Activated naive CD4-positive, alpha-beta T cell treated with anti-CD3 and anti-CD28 coated beads for 36 hours (primary cell): ENCODE measurements at regions of chr18 and their contacts with region 1.

Region 1: DNA sequence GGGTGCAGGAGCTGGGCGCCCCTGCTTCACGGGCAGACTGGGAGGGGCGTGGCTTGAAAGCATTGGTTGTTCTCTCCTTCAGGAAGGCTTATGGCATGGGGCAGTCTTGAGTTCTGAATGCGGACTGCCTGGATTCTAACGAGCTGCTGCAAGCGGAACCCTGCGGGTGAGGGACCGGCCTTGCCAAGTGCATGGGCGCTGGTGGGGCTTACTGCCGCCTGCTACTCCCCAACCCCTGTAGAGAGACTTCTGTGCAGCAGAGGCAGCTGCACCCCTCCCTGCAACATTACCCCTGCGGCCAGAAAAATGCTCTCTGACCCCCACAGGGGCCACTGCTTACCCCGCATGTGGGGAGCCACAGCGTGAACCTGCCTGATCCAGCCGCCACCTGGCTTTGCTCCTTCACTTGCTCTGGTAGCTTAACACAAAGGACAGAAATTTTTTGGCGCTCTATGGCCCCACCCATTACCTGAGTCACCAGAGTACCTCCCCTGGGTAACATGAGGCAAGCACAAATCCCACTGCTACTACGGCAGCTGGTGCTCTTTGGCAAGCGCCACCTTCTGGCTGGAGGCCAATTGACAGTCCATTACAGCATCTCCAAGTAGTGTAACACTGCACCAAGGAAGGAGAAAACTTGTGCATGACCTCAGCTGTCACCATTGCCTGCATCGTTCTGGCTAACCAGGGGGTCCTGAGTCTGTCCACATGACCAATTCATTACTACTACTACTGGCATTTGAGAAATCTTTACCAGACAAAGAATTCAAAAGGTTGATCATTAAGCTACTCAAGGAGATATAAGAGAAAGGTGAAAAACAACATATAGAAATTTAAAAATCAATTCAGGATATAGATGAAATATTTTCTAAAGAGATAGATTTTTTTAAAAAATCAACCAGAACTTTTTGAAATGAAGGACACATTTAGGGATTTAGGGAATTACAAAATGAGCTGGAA is 35.4 kb downstream of the MYL12B start:
- DNase-seq: peak; percentile 98
- H3K4me3 Mint-ChIP-seq: peak overlapping the region; percentile 93
- H3K27ac Mint-ChIP-seq: peak overlapping the region; percentile 79
- H3K4me1 Mint-ChIP-seq: peaks cover 3% of the 10 kb centered on the region
- H3K27me3 Mint-ChIP-seq: peaks cover 11% of the 10 kb centered on the region

Region 2: GRCh38 chr18:1779587-1779986 is 1517.7 kb before region 1 on chr18:
- CTCF ChIA-PET with region 1: no interaction called
- intact Hi-C with region 1: no loop called
- DNase-seq: no peak
- H3K4me3 Mint-ChIP-seq: no peak overlapping the region
- H3K27ac Mint-ChIP-seq: no peak overlapping the region
- H3K4me1 Mint-ChIP-seq: no peaks in the 10 kb centered on the region
- H3K27me3 Mint-ChIP-seq: no peaks in the 10 kb centered on the region

Region 3: GRCh38 chr18:2889761-2890192 is 407.5 kb before region 1 on chr18:
- CTCF ChIA-PET with region 1: no interaction called
- intact Hi-C with region 1: no loop called
- DNase-seq: no peak
- H3K4me3 Mint-ChIP-seq: no peak overlapping the region
- H3K27ac Mint-ChIP-seq: no peak overlapping the region
- H3K4me1 Mint-ChIP-seq: peaks cover 31% of the 10 kb centered on the region
- H3K27me3 Mint-ChIP-seq: no peaks in the 10 kb centered on the region

Region 4: DNA sequence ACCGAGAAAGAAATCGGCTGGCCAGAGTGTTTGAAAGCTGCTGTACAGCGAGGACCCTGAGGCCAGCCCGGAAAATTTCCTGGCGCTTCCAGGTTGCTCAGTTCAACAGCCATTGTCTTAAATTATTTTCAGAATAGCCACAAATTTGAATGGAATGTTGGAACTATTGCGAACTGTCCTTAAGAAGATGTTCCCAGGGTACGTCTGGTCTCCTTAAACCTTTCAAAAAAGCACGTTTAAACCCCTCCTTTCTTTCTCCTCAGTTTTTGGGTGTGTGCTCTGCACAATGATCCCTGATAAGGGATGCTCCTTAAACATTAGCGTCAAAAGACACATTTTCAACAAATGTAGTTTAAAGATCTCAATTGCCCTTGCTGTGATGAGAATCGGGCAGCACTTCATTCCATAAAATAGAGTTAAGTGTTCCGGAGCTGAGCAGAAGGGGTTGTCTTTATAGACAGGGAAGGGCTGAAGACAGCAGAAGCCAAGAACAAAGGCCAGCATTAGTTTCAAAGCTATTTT is 269.9 kb before region 1 on chr18:
- CTCF ChIA-PET with region 1: no interaction called
- intact Hi-C with region 1: no loop called
- DNase-seq: no peak
- H3K4me3 Mint-ChIP-seq: no peak overlapping the region
- H3K27ac Mint-ChIP-seq: no peak overlapping the region
- H3K4me1 Mint-ChIP-seq: peaks cover 2% of the 10 kb centered on the region
- H3K27me3 Mint-ChIP-seq: no peaks in the 10 kb centered on the region

Region 5: GRCh38 chr18:3261371-3262246 is 35.7 kb before region 1 on chr18 and contains the start of gene MYL12B:
- CTCF ChIA-PET with region 1: interaction called, 9 read pairs
- intact Hi-C with region 1: loop called (anchors 1 kb)
- DNase-seq: peak; percentile 79
- H3K4me3 Mint-ChIP-seq: peak within 1 kb of the TSS; percentile 92
- H3K27ac Mint-ChIP-seq: peak within 1 kb of the TSS; percentile 97
- H3K4me1 Mint-ChIP-seq: peaks cover 64% of the 10 kb centered on the region
- H3K27me3 Mint-ChIP-seq: no peaks in the 10 kb centered on the region
- total RNA-seq, gene MYL12B: 288 to 293 TPM

Region 6: DNA sequence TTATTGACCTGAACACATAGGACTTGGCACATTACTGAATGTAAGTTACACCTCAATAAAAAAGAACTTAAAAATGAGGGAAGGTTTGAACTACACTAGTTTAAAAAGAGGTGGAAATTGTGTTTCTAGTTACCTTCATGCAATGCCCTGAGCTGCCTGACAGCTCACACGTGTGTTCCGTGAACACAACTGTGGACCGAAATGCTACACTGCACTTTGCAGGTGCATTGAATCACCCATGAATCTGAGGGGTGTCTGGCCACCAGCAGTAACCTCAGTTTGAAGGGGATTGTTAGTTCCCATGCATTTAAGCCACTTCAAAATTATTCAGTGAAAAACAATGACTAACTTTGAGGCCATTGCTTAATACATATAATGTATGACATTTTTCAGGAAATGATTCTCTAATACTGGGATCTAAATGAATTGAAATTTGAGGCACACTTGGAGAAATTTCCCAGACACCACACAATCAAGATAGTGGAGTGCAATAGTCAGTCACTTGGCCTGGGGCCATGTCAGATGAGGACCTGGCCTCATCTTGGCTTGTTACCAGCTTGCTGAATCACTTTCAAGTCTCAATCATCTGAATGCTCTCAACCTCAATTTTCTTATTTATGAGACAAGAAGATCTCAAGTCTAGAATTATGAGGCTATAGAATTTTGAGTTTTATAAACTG is 24.0 kb after region 1 on chr18:
- CTCF ChIA-PET with region 1: interaction called, 14 read pairs
- intact Hi-C with region 1: no loop called
- DNase-seq: no peak
- H3K4me3 Mint-ChIP-seq: no peak overlapping the region
- H3K27ac Mint-ChIP-seq: no peak overlapping the region
- H3K4me1 Mint-ChIP-seq: peaks cover 7% of the 10 kb centered on the region
- H3K27me3 Mint-ChIP-seq: no peaks in the 10 kb centered on the region